Activated B cell treated with CpG ODN at 0.5 μM for 24 hours (primary cell): ENCODE measurements at regions of chr14 and their contacts with region 1.

Region 1: GRCh38 chr14:53152890-53153701 is at the start of gene DDHD1:
- DNase-seq: peak; percentile 92
- ATAC-seq: peak; percentile 86
- H3K4me3 Mint-ChIP-seq: peak within 1 kb of the TSS; percentile 98
- H3K27ac Mint-ChIP-seq: peak within 1 kb of the TSS; percentile 98
- H3K4me1 Mint-ChIP-seq: peaks cover 48% of the 10 kb centered on the region
- H3K27me3 Mint-ChIP-seq: no peaks in the 10 kb centered on the region
- CTCF ChIP-seq: no peak
- total RNA-seq, gene DDHD1: 44.0 and 59.8 TPM in 2 replicates

Region 2: DNA sequence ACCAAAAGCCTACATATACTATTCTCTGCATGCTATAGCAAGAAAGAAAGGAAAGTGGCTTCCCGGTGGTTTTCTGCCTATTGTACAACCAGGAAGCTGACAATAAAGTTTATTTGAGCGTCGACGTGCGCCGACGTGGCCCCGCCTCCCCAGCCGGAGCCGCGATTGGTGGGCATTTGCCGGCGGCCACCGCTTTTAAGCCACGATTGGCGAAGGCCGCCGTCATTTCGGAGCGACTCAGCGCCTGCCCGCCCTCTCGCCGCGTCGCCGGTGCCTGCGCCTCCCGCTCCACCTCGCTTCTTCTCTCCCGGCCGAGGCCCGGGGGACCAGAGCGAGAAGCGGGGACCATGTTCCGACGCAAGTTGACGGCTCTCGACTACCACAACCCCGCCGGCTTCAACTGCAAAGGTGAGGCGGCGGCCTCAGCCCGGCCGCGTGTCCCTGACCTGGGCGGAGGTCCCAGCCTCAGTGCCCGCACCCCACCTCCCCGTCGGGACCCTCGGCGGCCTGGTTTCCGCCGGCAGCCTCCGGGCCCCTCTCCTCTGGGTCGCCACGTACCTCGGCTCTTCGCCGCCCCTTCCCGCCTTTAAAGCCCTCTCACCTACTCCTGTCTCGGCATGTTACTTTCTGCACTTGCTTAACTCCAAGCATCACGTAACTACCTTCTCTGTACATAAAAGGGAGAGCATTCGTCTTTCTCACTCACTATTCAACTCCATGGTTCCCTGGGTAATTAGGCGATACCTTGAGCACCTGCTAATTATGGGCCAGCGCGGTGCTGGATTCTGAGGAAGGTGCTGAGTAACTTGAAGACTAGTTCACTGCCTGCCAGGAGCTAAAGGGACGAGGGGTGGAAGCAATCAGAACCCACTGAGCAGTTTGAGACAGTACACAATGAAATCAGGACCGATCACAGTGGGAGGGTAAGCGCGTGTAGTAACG is 1163.5 kb before region 1 on chr14 and contains the start of gene RTRAF:
- CTCF ChIA-PET with region 1: no interaction called
- POLR2A ChIA-PET with region 1: no interaction called
- intact Hi-C with region 1: loop called (anchors 1 kb)
- DNase-seq: peak; percentile 86
- ATAC-seq: peak; percentile 97
- H3K4me3 Mint-ChIP-seq: peak within 1 kb of the TSS; percentile 98
- H3K27ac Mint-ChIP-seq: peak within 1 kb of the TSS; percentile 93
- H3K4me1 Mint-ChIP-seq: peaks cover 37% of the 10 kb centered on the region
- H3K27me3 Mint-ChIP-seq: no peaks in the 10 kb centered on the region
- CTCF ChIP-seq: no peak
- total RNA-seq, gene RTRAF: 160 and 163 TPM in 2 replicates

Region 3: GRCh38 chr14:52729925-52730667 is 423.0 kb before region 1 on chr14 and contains the start of gene STYX:
- CTCF ChIA-PET with region 1: no interaction called
- POLR2A ChIA-PET with region 1: interaction called, 5 read pairs
- intact Hi-C with region 1: loop called (anchors 2 kb)
- DNase-seq: peak; percentile 95
- ATAC-seq: peak; percentile 96
- H3K4me3 Mint-ChIP-seq: peak within 1 kb of the TSS; percentile 94
- H3K27ac Mint-ChIP-seq: peak within 1 kb of the TSS; percentile 89
- H3K4me1 Mint-ChIP-seq: peaks cover 46% of the 10 kb centered on the region
- H3K27me3 Mint-ChIP-seq: no peaks in the 10 kb centered on the region
- CTCF ChIP-seq: no peak
- total RNA-seq, gene STYX: 13.1 and 13.5 TPM in 2 replicates

Region 4: DNA sequence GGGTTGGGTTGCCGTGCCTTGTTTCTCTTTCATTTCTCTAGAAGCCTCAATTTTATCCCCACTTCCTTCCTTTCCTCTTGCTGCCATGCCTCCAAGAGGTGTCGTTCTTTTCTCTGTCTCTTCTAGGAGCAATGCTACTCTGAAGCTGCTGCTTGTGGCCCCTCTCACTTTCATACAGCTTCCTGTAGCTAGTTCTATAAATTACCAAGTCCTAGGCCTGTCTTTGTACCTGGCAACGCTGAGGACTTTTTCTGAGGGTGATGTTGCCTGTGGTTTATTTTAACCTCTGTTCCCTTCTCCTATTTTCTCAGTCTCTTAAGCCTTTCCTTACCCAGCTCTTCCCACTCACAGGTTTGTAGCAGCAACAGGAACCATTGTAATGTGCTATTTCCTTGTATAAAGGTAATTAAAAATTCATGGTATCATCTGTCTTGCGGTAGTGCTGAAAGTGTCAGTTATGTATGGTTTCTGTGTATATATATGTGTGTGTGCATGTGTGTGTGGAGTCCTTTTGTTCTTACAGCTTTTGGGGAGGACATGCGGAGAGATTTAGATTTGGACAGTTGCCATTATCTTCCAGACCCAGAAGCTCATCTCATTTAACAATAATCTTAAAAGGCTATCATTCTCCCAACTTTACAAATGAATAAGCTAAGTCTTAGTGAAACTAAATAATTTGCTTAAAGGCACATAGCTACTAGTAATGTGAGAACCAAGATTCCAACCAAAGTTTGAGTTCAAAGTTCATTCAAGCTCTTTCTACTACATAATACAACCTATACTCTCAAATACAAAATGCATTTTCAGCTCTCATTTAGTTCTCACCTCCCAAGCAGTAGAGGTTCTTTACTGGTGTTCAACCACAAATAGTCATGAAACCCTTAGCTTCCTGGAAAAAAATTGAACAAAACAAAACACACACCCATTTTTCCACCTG is 43.7 kb before region 1 on chr14:
- CTCF ChIA-PET with region 1: interaction called, 4 read pairs
- POLR2A ChIA-PET with region 1: interaction called, 68 read pairs
- intact Hi-C with region 1: loop called (anchors 1 kb)
- DNase-seq: no peak
- ATAC-seq: peak; percentile 42
- H3K4me3 Mint-ChIP-seq: no peak overlapping the region
- H3K27ac Mint-ChIP-seq: no peak overlapping the region
- H3K4me1 Mint-ChIP-seq: peaks cover under 1% of the 10 kb centered on the region
- H3K27me3 Mint-ChIP-seq: no peaks in the 10 kb centered on the region
- CTCF ChIP-seq: no peak

Region 5: DNA sequence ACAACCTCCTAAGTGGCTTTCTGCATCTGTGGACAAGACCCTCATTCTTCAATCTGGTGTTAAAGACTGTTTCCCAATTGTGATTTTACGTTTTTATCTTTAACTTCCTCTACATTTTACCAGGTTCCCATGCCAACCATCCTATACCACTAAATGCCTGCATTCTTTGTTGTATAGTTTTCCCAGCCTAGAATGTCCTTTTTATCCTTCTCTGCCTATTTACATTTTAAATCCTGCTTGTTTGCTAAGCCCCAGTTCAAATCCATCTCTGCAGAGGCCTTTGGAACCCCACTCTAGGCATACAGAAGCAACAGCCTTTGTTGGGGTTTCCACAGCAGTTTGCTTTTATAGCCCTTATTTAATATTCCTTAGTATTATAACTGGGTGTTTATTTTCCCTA is 325.1 kb after region 1 on chr14:
- CTCF ChIA-PET with region 1: no interaction called
- POLR2A ChIA-PET with region 1: no interaction called
- intact Hi-C with region 1: no loop called
- DNase-seq: no peak
- ATAC-seq: no peak
- H3K4me3 Mint-ChIP-seq: no peak overlapping the region
- H3K27ac Mint-ChIP-seq: no peak overlapping the region
- H3K4me1 Mint-ChIP-seq: no peaks in the 10 kb centered on the region
- H3K27me3 Mint-ChIP-seq: no peaks in the 10 kb centered on the region
- CTCF ChIP-seq: no peak

Region 6: DNA sequence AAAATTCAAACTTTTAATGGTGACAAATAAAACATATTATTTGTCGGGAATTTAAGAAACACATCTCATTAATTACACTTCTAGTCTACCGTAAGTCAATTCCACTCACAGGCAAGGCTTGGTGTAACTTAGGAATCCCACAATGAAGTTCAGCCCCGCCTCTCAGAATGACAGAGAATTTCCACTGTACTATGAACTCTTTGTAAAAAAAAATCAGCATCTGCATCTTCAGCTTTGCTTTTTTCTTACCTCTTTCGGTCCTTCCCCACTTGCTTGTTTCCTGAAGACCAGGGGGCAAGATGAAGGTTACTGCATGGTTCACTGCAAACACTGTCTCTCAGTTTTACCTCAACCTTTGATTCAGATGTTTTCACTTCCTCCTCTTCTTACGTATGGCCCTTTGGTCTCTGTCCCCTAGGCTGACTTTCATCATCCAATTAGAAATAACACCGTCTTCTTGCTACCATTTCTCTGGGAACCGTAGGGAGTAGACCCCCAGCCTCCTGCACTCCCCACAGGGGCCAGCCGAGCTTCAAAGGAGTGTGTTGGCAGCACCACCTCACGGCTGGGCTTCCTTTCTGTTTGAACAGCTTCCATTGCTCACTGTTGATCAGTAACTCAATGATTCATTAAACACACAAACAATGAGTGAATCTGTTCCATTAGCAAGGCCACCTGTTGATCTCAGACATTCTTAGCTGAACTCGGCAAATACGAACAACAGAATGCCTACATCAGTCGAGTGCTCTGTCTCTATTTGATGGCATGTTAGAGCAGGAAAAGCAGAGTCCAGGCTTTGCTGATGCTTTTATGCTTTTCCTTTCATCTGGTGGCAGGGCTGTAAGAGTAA is 460.5 kb after region 1 on chr14:
- CTCF ChIA-PET with region 1: no interaction called
- POLR2A ChIA-PET with region 1: interaction called, 5 read pairs
- intact Hi-C with region 1: loop called (anchors 1 kb)
- DNase-seq: peak; percentile 59
- ATAC-seq: peak; percentile 93
- H3K4me3 Mint-ChIP-seq: peak overlapping the region; percentile 79
- H3K27ac Mint-ChIP-seq: peak overlapping the region; percentile 100
- H3K4me1 Mint-ChIP-seq: peaks cover 53% of the 10 kb centered on the region
- H3K27me3 Mint-ChIP-seq: no peaks in the 10 kb centered on the region
- CTCF ChIP-seq: no peak

Region 7: GRCh38 chr14:54509546-54510501 is 1356.7 kb after region 1 on chr14 and contains the start of gene CGRRF1:
- CTCF ChIA-PET with region 1: no interaction called
- POLR2A ChIA-PET with region 1: no interaction called
- intact Hi-C with region 1: loop called (anchors 5 kb)
- DNase-seq: peak; percentile 98
- ATAC-seq: peak; percentile 98
- H3K4me3 Mint-ChIP-seq: peak within 1 kb of the TSS; percentile 95
- H3K27ac Mint-ChIP-seq: peak within 1 kb of the TSS; percentile 89
- H3K4me1 Mint-ChIP-seq: peaks cover 41% of the 10 kb centered on the region
- H3K27me3 Mint-ChIP-seq: no peaks in the 10 kb centered on the region
- CTCF ChIP-seq: no peak
- total RNA-seq, gene CGRRF1: 11.9 and 14.1 TPM in 2 replicates